ENCODE measurements at regions of chr20 and their contacts with region 1.

Region 1: DNA sequence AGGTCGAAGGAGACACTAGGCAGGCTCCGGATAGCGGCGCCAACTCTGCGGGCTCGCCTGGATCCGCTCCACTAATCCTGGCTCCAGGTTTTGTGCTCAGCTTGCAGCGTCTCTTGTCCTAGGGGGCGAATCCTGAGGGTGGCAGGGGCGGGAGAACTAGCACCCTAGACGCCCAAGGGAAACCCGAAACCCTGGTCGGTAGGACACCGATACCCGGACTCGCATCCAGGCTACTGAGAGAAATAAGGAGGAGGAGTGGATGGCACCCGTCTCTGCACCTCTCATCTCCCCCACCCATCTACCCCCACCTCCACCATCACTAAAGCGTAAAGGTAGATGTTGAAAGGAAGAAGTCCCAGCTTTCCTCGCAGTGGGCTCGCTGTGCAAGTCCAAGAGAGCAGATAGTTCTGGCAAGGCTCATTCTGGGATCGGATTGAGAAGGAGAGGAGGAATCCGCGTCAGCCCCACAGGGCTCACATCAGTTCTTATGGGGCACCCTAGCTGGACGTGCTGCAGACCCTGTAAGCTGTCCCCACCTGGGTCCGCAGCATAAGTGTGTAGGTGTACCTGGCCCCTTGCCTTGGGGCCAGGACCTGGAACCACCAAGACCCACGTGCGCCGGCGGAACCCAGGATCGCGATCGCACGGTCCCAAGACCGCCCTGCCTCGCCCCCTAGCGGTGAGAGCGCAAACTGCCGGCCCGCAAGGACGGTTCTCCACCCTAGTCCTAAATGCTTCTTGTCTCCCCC is 6.9 kb downstream of the SLC32A1 start:
- DNase-seq: peak; percentile 90
- ATAC-seq: peak; percentile 81
- H3K4me3 Mint-ChIP-seq: peak overlapping the region; percentile 50
- H3K27ac Mint-ChIP-seq: no peak overlapping the region
- H3K4me1 Mint-ChIP-seq: peaks cover 39% of the 10 kb centered on the region
- H3K27me3 Mint-ChIP-seq: peaks cover 88% of the 10 kb centered on the region

Region 2: DNA sequence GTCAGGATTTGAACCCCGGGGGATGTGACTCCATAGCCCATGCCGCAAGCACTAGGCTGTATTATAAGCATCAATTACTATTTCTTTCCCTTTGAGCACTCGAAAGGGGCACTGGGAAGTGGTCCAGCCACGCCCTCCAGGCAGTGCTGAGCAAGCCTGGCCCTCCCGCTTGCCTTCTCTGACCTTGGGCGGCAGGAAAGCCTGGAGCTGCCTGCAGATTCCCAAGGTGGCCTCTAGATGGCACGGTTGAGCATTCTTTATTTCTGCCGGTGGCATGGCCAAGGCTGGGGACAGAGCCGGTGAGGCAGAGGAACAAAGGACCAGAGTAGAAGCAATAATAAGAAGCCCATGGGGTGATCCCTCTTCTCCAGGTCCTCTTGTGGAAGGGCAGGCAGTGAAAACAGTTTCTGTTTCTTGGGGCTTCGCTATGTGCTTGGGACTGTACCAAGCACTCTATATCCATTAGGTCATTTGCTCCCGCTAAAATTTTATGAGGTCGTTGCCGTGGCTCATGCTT is 97.5 kb before region 1 on chr20:
- CTCF ChIA-PET with region 1: interaction called, 3 read pairs
- POLR2A ChIA-PET with region 1: no interaction called
- intact Hi-C with region 1: loop called (anchors 5 kb)
- DNase-seq: peak; percentile 79
- ATAC-seq: peak; percentile 95
- H3K4me3 Mint-ChIP-seq: no peak overlapping the region
- H3K27ac Mint-ChIP-seq: no peak overlapping the region
- H3K4me1 Mint-ChIP-seq: no peaks in the 10 kb centered on the region
- H3K27me3 Mint-ChIP-seq: peaks cover 10% of the 10 kb centered on the region

Region 3: DNA sequence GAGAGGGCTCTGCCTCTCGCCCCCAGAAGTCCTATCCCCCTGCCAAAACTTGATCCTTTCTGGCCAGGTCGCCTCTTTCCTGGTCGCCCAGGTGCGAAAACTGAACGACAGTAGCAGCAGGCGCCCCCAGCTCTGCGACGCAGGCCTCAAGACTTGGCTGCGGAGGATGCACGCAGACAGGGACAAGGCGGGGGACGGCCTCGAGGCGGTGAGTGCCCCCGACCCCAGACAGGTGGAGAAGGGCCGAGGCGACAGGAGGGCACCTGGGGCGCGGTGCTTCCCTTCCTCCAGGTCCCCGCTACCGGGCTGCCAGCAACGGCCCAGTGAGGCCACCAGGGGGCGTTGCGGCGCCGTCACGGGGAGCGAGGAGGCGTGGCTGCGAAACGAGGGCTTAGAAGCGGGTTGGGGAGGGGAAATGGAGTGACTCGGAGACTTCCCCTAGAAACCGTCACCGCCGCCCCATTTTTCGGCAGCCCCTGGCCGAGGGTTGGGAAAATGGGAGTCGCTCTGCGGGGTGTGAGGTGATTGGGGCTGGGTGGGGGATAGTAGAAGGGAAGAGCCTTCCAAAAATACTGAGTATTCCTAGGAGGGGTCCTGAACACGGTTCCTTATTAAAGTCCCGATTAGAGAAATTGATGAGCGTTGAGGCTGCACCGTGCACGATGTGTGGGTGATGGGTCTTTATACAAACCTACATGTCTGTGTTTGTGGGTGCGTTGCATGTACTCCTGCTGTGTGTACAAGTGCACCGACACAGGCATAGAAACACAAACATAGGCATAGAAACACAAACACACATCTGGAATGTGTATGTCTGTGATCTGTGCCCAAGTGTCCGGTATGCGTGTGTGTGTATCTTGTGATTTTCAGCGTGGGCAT is 84.9 kb before region 1 on chr20:
- CTCF ChIA-PET with region 1: no interaction called
- POLR2A ChIA-PET with region 1: no interaction called
- intact Hi-C with region 1: loop called (anchors 1 kb)
- DNase-seq: peak; percentile 93
- ATAC-seq: peak; percentile 98
- H3K4me3 Mint-ChIP-seq: peak overlapping the region; percentile 44
- H3K27ac Mint-ChIP-seq: peak overlapping the region; percentile 41
- H3K4me1 Mint-ChIP-seq: peaks cover 7% of the 10 kb centered on the region
- H3K27me3 Mint-ChIP-seq: peaks cover 30% of the 10 kb centered on the region

Region 4: DNA sequence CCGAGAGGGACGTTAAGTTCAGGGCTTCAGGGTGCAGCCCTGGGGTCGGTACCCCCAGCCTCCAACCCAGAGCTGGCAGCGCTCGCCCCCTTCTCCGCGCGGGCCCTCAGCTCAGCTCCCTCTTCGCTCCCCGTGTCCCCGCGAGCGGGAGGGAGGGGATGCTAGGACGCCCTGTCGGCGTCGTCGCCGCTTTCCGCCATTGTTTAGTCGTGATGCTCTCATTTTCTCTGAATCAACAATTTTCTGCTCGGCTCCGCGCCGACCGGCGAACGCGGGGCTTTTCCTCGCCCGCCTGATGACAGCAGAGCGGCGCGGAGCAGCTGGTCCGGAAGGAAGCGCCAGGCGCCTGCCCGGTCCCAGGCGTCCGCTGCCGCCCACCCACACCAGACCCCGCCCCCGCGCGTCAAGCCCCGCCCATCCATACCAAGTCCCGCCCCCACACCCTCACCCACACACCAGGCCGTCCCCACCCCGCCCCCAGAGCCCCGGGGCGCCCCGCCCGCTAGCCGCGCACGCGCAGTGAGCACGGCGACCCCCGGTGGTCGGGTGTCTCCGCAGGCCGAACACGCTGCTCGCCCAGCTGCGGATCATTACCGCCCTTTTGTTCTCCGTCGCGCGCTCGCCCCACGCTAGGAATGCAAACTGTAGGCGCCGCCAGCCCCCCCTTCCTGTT is 56.9 kb before region 1 on chr20:
- CTCF ChIA-PET with region 1: interaction called, 6 read pairs
- POLR2A ChIA-PET with region 1: no interaction called
- intact Hi-C with region 1: loop called (anchors 2 to 10 kb)
- DNase-seq: peak; percentile 84
- ATAC-seq: peak; percentile 91
- H3K4me3 Mint-ChIP-seq: peak overlapping the region; percentile 63
- H3K27ac Mint-ChIP-seq: peak overlapping the region; percentile 49
- H3K4me1 Mint-ChIP-seq: peaks cover 5% of the 10 kb centered on the region
- H3K27me3 Mint-ChIP-seq: peaks cover 12% of the 10 kb centered on the region

Region 5: GRCh38 chr20:38779247-38780097 is 48.3 kb after region 1 on chr20:
- CTCF ChIA-PET with region 1: no interaction called
- POLR2A ChIA-PET with region 1: no interaction called
- intact Hi-C with region 1: no loop called
- DNase-seq: no peak
- ATAC-seq: peak; percentile 23
- H3K4me3 Mint-ChIP-seq: no peak overlapping the region
- H3K27ac Mint-ChIP-seq: no peak overlapping the region
- H3K4me1 Mint-ChIP-seq: peaks cover 9% of the 10 kb centered on the region
- H3K27me3 Mint-ChIP-seq: no peaks in the 10 kb centered on the region

Region 6: GRCh38 chr20:38790200-38791053 is 59.3 kb after region 1 on chr20:
- CTCF ChIA-PET with region 1: interaction called, 5 read pairs
- POLR2A ChIA-PET with region 1: no interaction called
- intact Hi-C with region 1: loop called (anchors 1 to 5 kb)
- DNase-seq: peak; percentile 79
- ATAC-seq: peak; percentile 90
- H3K4me3 Mint-ChIP-seq: peak overlapping the region; percentile 13
- H3K27ac Mint-ChIP-seq: no peak overlapping the region
- H3K4me1 Mint-ChIP-seq: peaks cover 17% of the 10 kb centered on the region
- H3K27me3 Mint-ChIP-seq: no peaks in the 10 kb centered on the region

Region 7: GRCh38 chr20:38805502-38805957 is 74.4 kb after region 1 on chr20 and contains the start of gene PPP1R16B:
- CTCF ChIA-PET with region 1: no interaction called
- POLR2A ChIA-PET with region 1: no interaction called
- intact Hi-C with region 1: loop called in 1 of 2 experiments (anchors 2 kb)
- DNase-seq: peak; percentile 86
- ATAC-seq: peak; percentile 79
- H3K4me3 Mint-ChIP-seq: peak within 1 kb of the TSS; percentile 86
- H3K27ac Mint-ChIP-seq: peak within 1 kb of the TSS; percentile 93
- H3K4me1 Mint-ChIP-seq: peaks cover 46% of the 10 kb centered on the region
- H3K27me3 Mint-ChIP-seq: no peaks in the 10 kb centered on the region
- total RNA-seq, gene PPP1R16B: 78.8 to 84.0 TPM

Region 8: DNA sequence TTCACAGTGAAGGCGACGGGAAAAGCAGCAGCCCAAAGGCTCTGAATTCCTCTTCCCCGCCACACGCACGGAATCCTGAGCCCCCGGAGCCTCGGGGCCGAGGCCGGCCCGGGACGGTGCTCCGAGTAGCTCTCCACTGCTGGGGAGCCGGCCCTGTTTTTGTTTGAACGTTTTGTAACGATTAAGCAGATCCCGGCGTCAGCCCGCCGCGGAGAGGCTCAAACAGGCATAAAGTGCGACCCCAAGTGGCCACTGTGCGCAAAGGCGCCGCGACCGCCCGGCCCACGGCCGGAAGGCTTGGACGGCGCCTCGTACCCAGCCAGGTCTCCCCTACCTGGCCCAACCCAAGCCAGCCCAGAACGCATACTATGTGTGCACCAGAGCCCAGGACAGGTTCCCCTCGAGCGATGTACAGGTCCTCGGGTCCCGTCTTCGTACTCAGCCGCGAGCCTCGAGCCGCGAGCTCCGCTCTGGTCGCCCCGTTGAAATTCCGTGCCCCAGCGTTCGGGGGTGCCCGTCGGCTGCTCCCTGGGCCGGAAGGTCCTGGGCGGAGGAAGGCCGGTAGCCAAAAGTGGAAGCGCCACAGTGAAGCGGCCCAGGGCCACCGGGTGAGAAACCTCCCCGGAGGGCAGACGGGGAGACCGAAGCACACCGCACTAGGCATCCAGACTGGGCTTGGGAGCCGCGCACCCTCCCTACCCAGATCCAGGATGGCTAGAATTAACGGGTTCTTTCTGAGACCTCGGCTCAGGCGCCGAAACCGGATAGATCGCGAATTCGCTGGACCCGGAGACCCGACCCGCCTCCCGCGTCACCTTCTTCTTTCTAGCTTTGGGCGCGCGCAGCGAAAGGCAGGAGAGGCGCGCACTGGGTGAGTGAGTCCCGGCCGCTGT is 1959.0 kb after region 1 on chr20:
- CTCF ChIA-PET with region 1: no interaction called
- POLR2A ChIA-PET with region 1: no interaction called
- intact Hi-C with region 1: loop called in 1 of 2 experiments (anchors 5 kb)
- DNase-seq: peak; percentile 89
- ATAC-seq: peak; percentile 64
- H3K4me3 Mint-ChIP-seq: peak overlapping the region; percentile 61
- H3K27ac Mint-ChIP-seq: no peak overlapping the region
- H3K4me1 Mint-ChIP-seq: peaks cover 11% of the 10 kb centered on the region
- H3K27me3 Mint-ChIP-seq: peaks cover 74% of the 10 kb centered on the region